Transverse colon (tissue), 4 donors: ENCODE measurements at regions of chr20 and their contacts with region 1.

Region 1: GRCh38 chr20:354298-355064 is 7.6 kb downstream of the NRSN2 start:
- DNase-seq: peak; percentile 82
- H3K4me3 ChIP-seq: no peak overlapping the region
- H3K27ac ChIP-seq: no peak overlapping the region
- H3K4me1 ChIP-seq: peaks cover 0 to 6% (median 0%) of the 10 kb centered on the region in 4 donors
- H3K27me3 ChIP-seq: no peaks in the 10 kb centered on the region
- CTCF ChIP-seq: peak; percentile 92 to 95 (median 94)
- EP300 ChIP-seq: no peak
- POLR2A ChIP-seq: no peak

Region 2: GRCh38 chr20:478949-479429 is 124.5 kb after region 1 on chr20:
- in situ Hi-C with region 1: loop called (anchors 5 to 10 kb)
- intact Hi-C with region 1: loop called (anchors 5 kb)
- DNase-seq: no peak
- H3K4me3 ChIP-seq: no peak overlapping the region
- H3K27ac ChIP-seq: no peak overlapping the region
- H3K4me1 ChIP-seq: peaks cover 0 to 26% (median 9%) of the 10 kb centered on the region in 4 donors
- H3K27me3 ChIP-seq: no peaks in the 10 kb centered on the region
- CTCF ChIP-seq: peak; percentile 55 to 66 (median 56)
- EP300 ChIP-seq: no peak
- POLR2A ChIP-seq: no peak

Region 3: DNA sequence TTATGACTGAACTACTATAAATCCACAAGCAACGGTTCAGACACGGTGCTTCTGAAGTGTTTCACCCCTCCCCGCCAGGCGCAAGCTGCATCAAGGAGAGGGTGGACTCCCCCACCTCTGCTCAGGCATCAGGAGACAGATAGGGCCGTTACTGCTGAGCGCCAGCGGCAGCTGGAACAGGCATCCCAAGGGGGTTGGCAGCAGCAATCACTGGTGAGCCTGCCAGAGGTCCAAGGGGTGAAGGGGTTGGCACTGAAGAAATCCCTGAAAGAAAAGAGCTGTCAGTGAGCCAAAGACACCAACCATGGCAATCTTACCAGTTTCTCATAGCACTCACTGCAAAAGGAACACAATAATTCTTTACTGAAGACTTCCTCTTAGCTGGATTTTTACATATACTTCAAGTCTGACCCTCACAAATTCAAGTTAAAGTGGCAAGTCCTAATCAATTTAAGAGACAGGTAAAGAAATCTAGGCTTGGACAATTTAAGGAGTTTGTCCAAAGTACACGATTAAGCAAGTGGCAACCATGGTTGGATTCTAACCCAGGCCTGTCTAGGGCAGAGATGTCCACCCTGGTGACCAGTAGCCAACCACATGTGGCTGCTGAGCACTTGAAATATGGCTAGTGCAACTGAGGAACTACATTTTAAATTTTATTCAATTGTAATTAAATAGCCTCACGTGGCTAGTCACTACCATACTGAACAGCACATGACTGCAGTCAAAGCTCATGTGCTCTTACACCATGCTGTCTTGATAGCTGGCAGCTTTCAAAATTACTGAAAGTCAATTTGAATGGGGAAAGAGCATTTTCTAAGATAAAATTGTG is 129.5 kb after region 1 on chr20:
- in situ Hi-C with region 1: loop called (anchors 5 to 10 kb)
- intact Hi-C with region 1: loop called (anchors 5 kb)
- DNase-seq: no peak
- H3K4me3 ChIP-seq: no peak overlapping the region
- H3K27ac ChIP-seq: no peak overlapping the region
- H3K4me1 ChIP-seq: peaks cover 0 to 7% (median 1%) of the 10 kb centered on the region in 4 donors
- H3K27me3 ChIP-seq: no peaks in the 10 kb centered on the region
- CTCF ChIP-seq: no peak
- EP300 ChIP-seq: no peak
- POLR2A ChIP-seq: no peak

Region 4: DNA sequence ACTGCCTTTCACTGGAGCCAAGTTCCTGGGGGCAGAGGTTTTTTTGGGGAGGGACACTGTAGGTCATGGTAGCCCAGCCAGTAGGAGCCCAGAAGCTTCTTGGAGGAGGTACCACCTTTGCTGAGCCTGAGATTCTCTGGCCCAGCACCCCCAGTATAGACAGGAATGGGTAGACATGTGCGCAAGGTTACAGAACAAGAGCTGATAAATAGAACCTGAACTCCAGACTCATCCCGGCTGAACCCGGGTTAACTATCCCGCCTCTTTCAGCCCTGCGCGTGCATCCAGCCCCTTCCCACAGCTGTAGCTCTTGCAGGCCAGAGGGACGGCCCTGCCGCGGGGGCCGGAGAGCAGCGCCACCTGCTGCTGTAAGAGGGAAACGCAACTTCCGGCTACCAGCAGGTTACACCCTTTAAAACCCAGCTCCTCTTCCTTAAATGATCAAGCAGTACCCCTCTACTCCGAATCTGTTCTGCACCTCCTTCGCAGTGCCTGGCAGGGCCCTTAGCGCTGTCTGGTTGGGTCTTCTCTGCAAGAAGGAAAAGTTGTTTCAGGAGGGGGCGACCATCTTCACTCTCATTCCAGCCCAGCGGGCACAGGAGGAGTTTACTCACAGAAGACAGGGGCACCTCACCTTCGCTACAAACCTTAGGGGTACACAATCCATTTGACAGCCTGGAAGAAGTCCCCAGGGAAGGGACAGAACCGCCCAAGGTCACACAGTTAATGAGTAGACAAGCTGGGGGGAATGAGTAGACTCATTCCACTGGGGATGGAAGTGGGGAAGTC is 291.0 kb after region 1 on chr20:
- in situ Hi-C with region 1: loop called in 2 of 4 experiments (anchors 10 kb)
- intact Hi-C with region 1: no loop called
- DNase-seq: peak; percentile 74
- H3K4me3 ChIP-seq: no peak overlapping the region
- H3K27ac ChIP-seq: no peak overlapping the region
- H3K4me1 ChIP-seq: peaks cover 0 to 9% (median 2%) of the 10 kb centered on the region in 4 donors
- H3K27me3 ChIP-seq: peaks cover 11% of the 10 kb centered on the region
- CTCF ChIP-seq: peak; percentile 84 to 96 (median 92)
- EP300 ChIP-seq: no peak
- POLR2A ChIP-seq: no peak